IMR-90 (cell line): ENCODE measurements at regions of chr9 and their contacts with region 1.

Region 1: GRCh38 chr9:35814841-35815543 is at the start of gene HINT2:
- DNase-seq: peak; percentile 99
- ATAC-seq: peak; percentile 94
- H3K4me3 ChIP-seq: peak within 1 kb of the TSS; percentile 76
- H3K27ac ChIP-seq: peak within 1 kb of the TSS; percentile 83
- H3K4me1 ChIP-seq: no peaks in the 10 kb centered on the region; the same call in 1 of the 2 replicates
- H3K27me3 ChIP-seq: peaks cover 6% of the 10 kb centered on the region; the same call in 1 of the 2 replicates
- CTCF ChIP-seq: no peak
- POLR2A ChIP-seq: peak; percentile 41; the same call in 1 of the 2 replicates
- RAD21 ChIP-seq: no peak
- total RNA-seq, gene HINT2: 6.7 and 7.5 TPM in 2 replicates

Region 2: DNA sequence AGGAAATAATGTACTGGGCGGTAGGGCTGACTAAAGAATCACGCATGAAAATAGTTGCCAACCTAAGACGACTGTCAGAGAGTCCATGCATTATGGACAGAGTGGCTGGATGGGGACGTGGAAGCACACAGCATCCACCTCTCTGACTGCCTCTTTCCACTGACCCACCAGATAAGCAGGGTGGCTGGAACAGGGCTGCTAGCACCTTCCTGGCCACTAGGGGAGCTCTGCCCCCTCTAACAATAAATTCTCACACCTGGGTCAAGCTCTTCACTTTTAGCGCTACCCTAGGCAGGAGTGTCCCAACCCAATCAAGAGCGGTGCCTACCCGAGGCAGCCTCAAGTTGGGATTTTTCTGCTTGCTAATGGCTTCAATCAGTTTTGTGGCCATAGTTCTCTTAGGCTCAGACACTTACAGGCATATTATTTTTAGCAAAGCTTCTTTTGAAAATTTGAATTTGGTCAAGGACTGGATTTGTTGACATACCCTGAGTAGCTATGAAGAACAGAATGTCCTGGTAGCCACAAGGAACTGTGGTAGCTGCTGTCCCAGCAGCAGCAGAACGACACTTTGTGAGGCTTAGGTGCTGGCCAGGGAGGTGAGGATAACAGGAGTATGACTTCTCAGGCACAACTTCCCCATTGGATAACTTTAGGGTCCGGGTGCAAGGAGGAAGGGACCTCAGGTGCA is 118.3 kb before region 1 on chr9:
- CTCF ChIA-PET with region 1: no interaction called
- POLR2A ChIA-PET with region 1: no interaction called
- dilution Hi-C with region 1: no loop called
- in situ Hi-C with region 1: no loop called
- intact Hi-C with region 1: no loop called
- DNase-seq: peak; percentile 40
- ATAC-seq: peak; percentile 60
- H3K4me3 ChIP-seq: no peak overlapping the region
- H3K27ac ChIP-seq: no peak overlapping the region
- H3K4me1 ChIP-seq: peaks cover 7% of the 10 kb centered on the region; the same call in 1 of the 2 replicates
- H3K27me3 ChIP-seq: no peaks in the 10 kb centered on the region
- CTCF ChIP-seq: peak; percentile 71
- POLR2A ChIP-seq: no peak
- RAD21 ChIP-seq: peak; percentile 52

Region 3: DNA sequence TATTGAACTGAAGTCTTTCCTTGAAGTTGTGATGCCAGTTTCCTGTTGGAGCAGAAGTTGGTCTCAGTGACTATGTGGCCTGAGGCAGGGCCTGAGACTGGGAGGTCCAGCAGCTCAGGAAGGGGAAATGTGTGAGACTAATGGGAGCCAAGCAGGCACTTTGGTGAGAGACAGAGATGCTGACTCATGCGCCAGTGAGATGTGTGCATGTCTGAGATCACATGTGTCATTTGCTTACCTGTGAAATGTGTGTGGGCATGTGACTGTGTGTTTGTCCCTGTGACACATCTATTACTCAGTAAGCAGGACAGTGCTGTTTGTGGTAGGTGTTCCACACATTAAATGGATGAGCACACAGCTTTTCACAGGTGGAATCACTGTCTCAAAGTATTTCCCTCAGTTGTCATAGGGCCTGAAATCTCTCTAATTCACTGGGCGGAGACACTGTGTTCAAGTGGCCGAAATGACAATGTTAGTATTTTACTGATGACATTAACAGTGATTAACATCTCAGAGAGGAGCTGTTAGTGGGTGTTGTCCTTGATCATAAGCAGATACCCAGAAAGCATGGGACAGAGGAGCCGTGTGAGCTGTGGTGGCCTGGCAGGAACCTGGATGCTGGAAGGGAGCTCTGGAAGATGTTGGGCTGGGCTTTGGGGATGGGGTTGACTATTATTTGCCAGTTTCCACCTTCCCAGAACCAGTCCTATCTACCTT is 16.2 kb before region 1 on chr9:
- CTCF ChIA-PET with region 1: no interaction called
- POLR2A ChIA-PET with region 1: interaction called, 14 read pairs
- dilution Hi-C with region 1: no loop called
- in situ Hi-C with region 1: no loop called
- intact Hi-C with region 1: no loop called
- DNase-seq: peak; percentile 76
- ATAC-seq: peak; percentile 70
- H3K4me3 ChIP-seq: no peak overlapping the region
- H3K27ac ChIP-seq: no peak overlapping the region
- H3K4me1 ChIP-seq: peaks cover 3% of the 10 kb centered on the region
- H3K27me3 ChIP-seq: no peaks in the 10 kb centered on the region
- CTCF ChIP-seq: no peak
- POLR2A ChIP-seq: no peak
- RAD21 ChIP-seq: no peak